RWPE1 (cell line): ENCODE measurements at regions of chr7 and their contacts with region 1.

Region 1: DNA sequence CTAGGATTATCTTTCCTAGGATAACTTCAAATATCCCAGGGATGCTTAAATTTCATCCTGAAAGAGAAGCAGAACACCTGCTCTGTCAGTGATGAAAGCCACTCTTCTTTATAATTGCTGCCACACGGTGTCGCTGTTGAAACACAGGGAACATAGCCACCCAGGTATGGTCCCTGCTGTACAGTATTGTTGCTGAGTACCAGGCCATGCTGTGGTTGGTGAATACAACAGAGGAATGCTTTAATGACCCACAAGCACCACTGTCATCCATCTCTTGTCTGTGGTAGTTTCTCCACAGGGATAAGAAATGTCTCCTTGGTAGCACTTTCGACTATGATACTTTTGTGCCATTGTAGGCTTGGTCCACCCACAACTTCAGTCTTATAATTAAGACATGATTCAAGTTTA is 70.6 kb upstream of the STARD3NL start:
- DNase-seq: peak; percentile 70
- H3K27ac ChIP-seq: no peak overlapping the region
- CTCF ChIP-seq: peak; percentile 90

Region 2: GRCh38 chr7:38222481-38223096 is 115.1 kb after region 1 on chr7:
- CTCF ChIA-PET with region 1: interaction called, 13 read pairs
- POLR2A ChIA-PET with region 1: no interaction called
- DNase-seq: peak; percentile 61
- H3K27ac ChIP-seq: no peak overlapping the region
- CTCF ChIP-seq: peak; percentile 96

Region 3: GRCh38 chr7:38311329-38311937 is 203.9 kb after region 1 on chr7:
- CTCF ChIA-PET with region 1: no interaction called
- POLR2A ChIA-PET with region 1: no interaction called
- DNase-seq: no peak
- H3K27ac ChIP-seq: no peak overlapping the region
- CTCF ChIP-seq: no peak

Region 4: GRCh38 chr7:39656415-39656814 is 1548.9 kb after region 1 on chr7:
- CTCF ChIA-PET with region 1: no interaction called
- POLR2A ChIA-PET with region 1: no interaction called
- DNase-seq: no peak
- H3K27ac ChIP-seq: no peak overlapping the region
- CTCF ChIP-seq: no peak